IMR-90 (cell line): ENCODE measurements at regions of chr3 and their contacts with region 1.

Region 1: DNA sequence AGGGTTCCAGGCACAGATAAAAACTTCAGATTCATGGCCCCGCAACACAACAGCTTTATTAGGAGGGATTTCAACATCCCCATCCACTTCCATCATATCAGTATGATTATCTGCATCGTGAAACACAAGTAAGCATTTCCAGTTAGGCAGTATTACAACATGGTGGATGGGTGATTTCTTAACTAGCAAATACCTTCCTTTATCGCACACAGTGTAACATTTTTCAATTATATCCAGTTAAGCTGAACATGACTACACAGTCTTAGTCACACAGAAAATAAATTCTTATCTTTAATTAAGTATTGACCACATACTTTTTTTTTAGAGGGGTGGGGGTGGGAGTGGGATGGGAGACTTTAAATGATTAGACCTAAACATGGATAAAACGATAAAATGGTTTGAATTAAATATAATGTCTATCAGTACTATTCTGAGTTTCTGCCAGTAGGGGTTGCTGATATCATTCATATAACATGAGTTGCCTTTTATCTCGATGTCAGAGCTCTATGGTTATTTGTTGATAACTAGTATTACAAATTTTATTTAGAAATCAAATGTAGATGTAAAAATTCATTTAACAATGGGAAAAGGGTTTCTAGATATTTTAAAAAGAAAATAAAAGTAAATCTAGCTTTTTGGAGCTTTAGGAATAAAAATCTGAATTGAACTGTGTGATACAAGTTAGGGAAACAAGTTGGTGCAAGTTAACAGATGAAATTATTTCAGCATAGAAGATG is 146.6 kb downstream of the TBL1XR1 start:
- DNase-seq: peak; percentile 64
- ATAC-seq: peak; percentile 83
- H3K4me3 ChIP-seq: no peak overlapping the region
- H3K27ac ChIP-seq: no peak overlapping the region; the same call in 1 of the 2 replicates
- H3K4me1 ChIP-seq: no peaks in the 10 kb centered on the region
- H3K27me3 ChIP-seq: no peaks in the 10 kb centered on the region
- CTCF ChIP-seq: peak; percentile 64
- POLR2A ChIP-seq: 0 out of 2 replicates have a peak, but pooled peaks have one; percentile 35
- RAD21 ChIP-seq: peak; percentile 78

Region 2: GRCh38 chr3:177109688-177110330 is 59.1 kb after region 1 on chr3:
- CTCF ChIA-PET with region 1: no interaction called
- POLR2A ChIA-PET with region 1: no interaction called
- dilution Hi-C with region 1: no loop called
- in situ Hi-C with region 1: no loop called
- intact Hi-C with region 1: no loop called
- DNase-seq: no peak
- ATAC-seq: no peak
- H3K4me3 ChIP-seq: no peak overlapping the region
- H3K27ac ChIP-seq: no peak overlapping the region
- H3K4me1 ChIP-seq: peaks cover 8% of the 10 kb centered on the region; the same call in 1 of the 2 replicates
- H3K27me3 ChIP-seq: no peaks in the 10 kb centered on the region
- CTCF ChIP-seq: no peak
- POLR2A ChIP-seq: no peak
- RAD21 ChIP-seq: no peak

Region 3: DNA sequence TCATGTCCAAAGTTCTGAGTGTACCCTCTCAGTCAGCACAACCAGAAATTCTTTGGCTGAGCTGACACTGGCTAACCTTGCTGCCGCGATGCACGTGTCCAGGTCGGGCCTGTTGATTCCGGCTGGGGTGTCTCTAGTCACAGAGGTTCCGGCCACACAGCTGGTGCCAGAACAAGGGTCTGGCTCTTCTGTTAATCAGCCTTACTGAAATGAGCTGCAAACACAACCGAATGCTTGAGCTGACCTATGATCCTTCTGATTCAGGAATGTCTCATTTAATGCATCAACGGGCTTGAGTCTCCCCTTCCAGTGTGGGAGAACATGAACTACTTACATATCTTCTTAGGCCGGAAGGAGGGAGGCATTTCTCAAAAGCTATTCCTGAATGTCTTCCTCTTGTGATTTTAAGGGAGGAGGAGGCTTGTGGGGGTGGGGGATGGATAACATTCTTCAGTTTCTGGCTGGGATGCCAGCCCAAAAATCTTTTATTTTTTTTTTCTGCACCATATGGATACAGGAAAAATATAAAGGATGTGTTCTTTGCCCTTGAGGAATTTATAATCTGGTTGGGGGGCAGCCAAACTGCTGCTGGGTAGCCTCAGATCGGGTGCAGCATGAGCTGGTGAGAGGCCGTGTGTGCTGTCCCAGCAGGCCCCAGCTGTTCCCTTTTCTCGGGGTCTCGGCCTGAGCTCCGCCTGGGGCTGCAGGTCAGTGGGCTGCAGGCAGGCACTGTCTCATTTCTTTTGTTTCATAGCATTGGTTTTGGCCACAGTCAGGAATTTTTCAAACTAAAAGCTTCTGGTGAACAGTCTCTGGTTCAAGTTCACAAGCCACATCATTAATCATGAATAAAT is 465.7 kb after region 1 on chr3:
- CTCF ChIA-PET with region 1: no interaction called
- POLR2A ChIA-PET with region 1: no interaction called
- dilution Hi-C with region 1: no loop called
- in situ Hi-C with region 1: no loop called
- intact Hi-C with region 1: loop called (anchors 1 kb)
- DNase-seq: peak; percentile 90
- ATAC-seq: peak; percentile 90
- H3K4me3 ChIP-seq: no peak overlapping the region
- H3K27ac ChIP-seq: peak overlapping the region; percentile 61
- H3K4me1 ChIP-seq: peaks cover 16% of the 10 kb centered on the region
- H3K27me3 ChIP-seq: no peaks in the 10 kb centered on the region
- CTCF ChIP-seq: no peak
- POLR2A ChIP-seq: no peak
- RAD21 ChIP-seq: no peak

Region 4: GRCh38 chr3:177824190-177824786 is 773.6 kb after region 1 on chr3:
- CTCF ChIA-PET with region 1: no interaction called
- POLR2A ChIA-PET with region 1: no interaction called
- dilution Hi-C with region 1: no loop called
- in situ Hi-C with region 1: no loop called
- intact Hi-C with region 1: loop called (anchors 10 kb)
- DNase-seq: peak; percentile 55
- ATAC-seq: peak; percentile 73
- H3K4me3 ChIP-seq: no peak overlapping the region
- H3K27ac ChIP-seq: peak overlapping the region; percentile 60; the same call in 1 of the 2 replicates
- H3K4me1 ChIP-seq: peaks cover 21% of the 10 kb centered on the region
- H3K27me3 ChIP-seq: no peaks in the 10 kb centered on the region
- CTCF ChIP-seq: no peak
- POLR2A ChIP-seq: no peak
- RAD21 ChIP-seq: no peak